Body of pancreas (tissue), 4 donors: ENCODE measurements at regions of chr7 and their contacts with region 1.

Region 1: GRCh38 chr7:12069757-12070156 is 141.3 kb upstream of the TMEM106B start:
- DNase-seq: no peak
- ATAC-seq: no peak
- H3K4me3 ChIP-seq: no peak overlapping the region
- H3K27ac ChIP-seq: no peak overlapping the region
- H3K4me1 ChIP-seq: no peaks in the 10 kb centered on the region
- H3K27me3 ChIP-seq: no peaks in the 10 kb centered on the region
- CTCF ChIP-seq: no peak
- POLR2A ChIP-seq: no peak

Region 2: GRCh38 chr7:11951909-11952308 is 117.8 kb before region 1 on chr7:
- intact Hi-C with region 1: no loop called
- DNase-seq: no peak
- ATAC-seq: no peak
- H3K4me3 ChIP-seq: no peak overlapping the region
- H3K27ac ChIP-seq: no peak overlapping the region
- H3K4me1 ChIP-seq: no peaks in the 10 kb centered on the region
- H3K27me3 ChIP-seq: no peaks in the 10 kb centered on the region
- CTCF ChIP-seq: no peak
- POLR2A ChIP-seq: no peak

Region 3: DNA sequence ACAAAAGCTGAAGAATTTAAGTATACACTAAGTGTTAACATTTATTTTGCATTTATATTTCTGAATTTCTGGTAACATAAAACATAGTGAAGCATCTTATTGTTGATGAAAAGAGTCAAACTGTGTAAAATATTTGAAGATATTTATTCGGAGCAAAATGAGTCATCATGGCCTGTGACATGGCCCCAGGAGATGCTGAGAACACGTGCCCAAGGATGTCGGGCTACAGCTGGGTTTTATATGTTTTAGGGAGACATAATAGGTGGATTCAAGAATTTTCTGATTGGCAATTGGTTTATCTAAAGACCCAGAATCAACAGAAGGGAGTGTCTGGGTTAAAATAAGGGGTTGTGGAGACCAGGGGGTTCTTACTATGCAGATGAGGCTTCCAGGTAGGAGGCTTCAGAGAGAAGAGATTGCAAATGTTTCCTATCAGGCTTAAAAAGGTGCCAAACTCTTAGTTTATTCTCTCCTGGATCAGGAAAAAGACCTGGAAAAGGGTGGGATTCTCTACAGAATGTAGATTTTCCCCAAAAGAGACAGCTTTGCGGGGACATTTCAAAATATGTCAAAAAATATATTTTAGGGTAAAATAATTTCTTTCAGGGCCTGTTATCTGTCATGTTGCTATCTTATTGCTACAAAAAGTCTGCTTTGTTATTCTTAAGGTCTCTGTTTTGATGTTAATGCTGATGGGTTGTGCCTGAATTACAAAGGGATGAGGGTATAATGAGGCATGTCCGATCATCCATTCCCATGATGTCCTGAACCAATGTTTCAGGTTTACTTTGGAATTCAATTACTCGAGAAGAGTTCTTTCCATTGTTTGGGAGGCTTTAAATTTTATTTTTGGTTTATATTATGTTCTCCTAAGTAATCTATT is 259.4 kb after region 1 on chr7:
- intact Hi-C with region 1: loop called (anchors 5 kb)
- DNase-seq: no peak
- ATAC-seq: no peak
- H3K4me3 ChIP-seq: no peak overlapping the region
- H3K27ac ChIP-seq: no peak overlapping the region
- H3K4me1 ChIP-seq: no peaks in the 10 kb centered on the region
- H3K27me3 ChIP-seq: no peaks in the 10 kb centered on the region
- CTCF ChIP-seq: no peak
- POLR2A ChIP-seq: no peak